Right ventricle myocardium inferior (tissue), 1 donor: ENCODE measurements at regions of chr11 and their contacts with region 1.

Region 1: DNA sequence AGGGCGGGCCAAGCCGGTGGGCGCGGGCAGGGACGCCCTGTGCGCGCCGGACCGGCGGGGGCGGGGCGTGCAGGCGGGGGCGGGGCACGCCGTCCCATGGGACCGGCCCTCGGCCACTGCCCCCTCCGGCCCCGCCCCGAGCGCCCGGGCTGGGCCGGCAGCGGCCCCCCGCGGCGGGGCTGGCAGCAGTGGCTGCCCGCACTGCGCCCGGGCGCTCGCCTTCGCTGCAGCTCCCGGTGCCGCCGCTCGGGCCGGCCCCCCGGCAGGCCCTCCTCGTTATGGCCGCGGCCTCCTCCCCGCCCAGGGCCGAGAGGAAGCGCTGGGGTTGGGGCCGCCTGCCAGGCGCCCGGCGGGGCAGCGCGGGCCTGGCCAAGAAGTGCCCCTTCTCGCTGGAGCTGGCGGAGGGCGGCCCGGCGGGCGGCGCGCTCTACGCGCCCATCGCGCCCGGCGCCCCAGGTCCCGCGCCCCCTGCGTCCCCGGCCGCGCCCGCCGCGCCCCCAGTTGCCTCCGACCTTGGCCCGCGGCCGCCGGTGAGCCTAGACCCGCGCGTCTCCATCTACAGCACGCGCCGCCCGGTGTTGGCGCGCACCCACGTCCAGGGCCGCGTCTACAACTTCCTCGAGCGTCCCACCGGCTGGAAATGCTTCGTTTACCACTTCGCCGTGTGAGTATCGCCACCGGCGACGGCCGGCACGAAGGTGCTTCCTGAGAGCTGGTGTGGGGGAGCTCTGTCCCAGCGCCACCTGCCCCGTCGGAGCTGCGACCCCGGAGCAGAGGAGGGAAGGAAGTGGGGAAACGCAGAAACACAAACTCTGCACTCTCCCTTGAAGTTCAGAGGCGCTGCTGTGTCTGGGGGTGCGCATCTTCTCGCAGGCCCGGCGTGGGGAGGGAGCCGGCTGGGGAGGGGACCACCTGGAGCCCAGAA is at the start of gene KCNQ1:
- DNase-seq: peak; percentile 82
- ATAC-seq: peak; percentile 76
- total RNA-seq, gene KCNQ1: 40.0 TPM

Region 2: DNA sequence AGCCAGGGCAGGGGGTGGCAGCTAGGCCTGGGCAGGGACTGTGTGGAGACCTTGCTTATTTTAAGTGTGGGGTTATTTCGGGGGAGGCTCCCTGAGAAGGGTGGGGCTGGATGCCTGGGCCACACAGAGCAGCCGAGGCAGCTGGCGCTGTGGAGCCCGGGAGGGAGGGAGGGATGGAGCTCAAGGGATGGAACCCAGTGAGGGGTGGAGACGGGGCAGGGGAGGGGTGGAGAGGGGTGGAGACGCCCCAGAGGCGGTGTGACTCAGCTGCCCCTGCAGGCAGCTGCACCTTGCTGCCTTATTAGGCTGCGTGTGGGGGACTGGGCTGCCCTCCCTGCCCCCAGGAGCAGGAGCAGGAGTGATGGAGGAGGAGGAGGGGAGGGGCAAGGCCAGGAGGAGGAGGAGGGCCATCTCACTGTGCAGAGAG is 54.3 kb before region 1 on chr11:
- intact Hi-C with region 1: no loop called
- DNase-seq: no peak
- ATAC-seq: peak; percentile 13

Region 3: DNA sequence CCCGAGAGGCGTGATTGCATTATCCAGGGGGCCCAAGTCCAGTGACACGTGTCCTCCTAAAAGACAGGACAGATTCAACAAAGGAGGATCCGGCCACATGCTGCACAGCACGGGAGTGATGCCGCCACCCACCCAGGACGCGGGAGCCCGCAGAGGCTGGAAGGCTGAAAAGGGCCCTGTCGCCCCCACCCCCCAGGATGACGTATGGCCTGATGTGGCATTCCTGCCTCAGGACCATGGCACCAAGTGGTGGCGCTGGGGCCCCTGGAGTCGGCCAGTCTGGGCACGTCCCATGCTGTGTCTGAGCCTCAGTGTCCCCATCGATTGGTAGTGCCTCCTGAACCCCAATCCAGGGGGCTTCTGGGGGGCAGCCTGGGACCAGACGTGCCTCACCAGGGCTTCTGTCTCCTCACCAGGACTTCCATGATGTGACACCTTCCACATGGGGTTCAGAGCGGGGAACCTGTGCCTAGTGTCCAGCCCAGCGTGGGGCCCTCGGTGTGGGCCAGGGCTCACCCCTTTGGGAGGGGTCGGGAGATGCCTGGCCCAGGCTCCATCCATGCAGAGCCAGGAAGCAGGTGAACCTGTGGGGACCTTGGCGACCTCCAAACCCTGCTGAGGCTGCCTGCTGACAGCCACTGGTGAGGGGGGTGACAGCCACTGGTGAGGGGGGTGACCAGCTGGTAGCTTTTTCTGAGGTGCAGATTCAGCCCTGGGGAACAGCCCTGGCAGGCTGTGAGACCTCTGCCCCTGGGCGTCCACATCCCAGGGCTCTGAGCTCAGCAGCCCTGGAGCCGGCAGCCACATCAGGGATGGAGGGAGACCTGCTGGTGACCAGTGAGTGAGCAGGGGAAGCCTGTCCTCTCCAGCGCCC is 75.0 kb after region 1 on chr11:
- intact Hi-C with region 1: loop called (anchors 5 kb)
- DNase-seq: peak; percentile 25
- ATAC-seq: no peak

Region 4: GRCh38 chr11:2526808-2527381 is 81.8 kb after region 1 on chr11:
- intact Hi-C with region 1: loop called (anchors 5 kb)
- DNase-seq: peak; percentile 79
- ATAC-seq: peak; percentile 21